Naive thymus-derived CD4-positive, alpha-beta T cell (primary cell): ENCODE measurements at regions of chr6 and their contacts with region 1.

Region 1: DNA sequence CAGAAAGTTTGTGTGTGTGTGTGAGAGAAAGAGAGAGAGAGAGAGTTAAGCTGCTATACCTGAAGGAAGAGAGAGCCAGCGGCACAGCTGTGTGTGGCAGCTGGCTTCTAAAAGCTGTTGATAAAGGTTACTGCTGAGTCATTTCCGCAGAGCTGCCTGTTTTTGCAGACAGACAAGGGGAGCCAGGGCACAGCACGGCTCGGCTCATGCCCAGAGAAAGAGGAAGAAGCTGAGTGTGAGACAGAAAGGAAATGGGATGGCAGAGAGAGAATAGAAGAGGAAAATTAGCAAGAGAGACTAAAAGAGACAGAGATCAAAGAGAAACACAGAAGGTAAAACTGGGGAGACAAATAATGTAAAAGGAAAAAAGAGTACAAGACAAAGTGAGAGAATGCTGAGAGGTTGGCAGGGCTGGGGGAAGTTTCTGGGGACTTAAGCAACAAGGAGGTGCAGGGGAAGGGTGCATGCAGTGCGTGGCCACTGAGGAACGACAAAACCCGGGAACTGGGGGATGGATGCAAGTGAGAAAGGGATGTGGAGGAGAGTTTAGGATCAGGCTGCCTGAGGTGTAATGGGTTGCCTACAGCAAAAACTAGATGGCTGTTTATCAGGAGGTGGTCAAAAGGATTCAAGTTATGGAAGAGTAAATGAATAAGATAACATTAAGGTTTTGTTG is 22.7 kb downstream of the HLA-A start:
- DNase-seq: peak in 8 of 9 donors; percentile 55 to 89 (median 82)
- ATAC-seq: peak; percentile 97
- H3K4me3 ChIP-seq: peak overlapping the region; percentile 52
- H3K4me3 Mint-ChIP-seq: peak overlapping the region; percentile 73 to 96 (median 84)
- H3K27ac ChIP-seq: peak overlapping the region; percentile 52
- H3K27ac Mint-ChIP-seq: peak overlapping the region; percentile 77 to 94 (median 90)
- H3K4me1 ChIP-seq: peaks cover 22 to 30% of the 10 kb centered on the region in 2 donors
- H3K4me1 Mint-ChIP-seq: peaks cover 32 to 51% (median 46%) of the 10 kb centered on the region in 7 donors
- H3K27me3 ChIP-seq: no peaks in the 10 kb centered on the region
- H3K27me3 Mint-ChIP-seq: peaks cover 0 to 2% (median 0%) of the 10 kb centered on the region in 5 donors

Region 2: DNA sequence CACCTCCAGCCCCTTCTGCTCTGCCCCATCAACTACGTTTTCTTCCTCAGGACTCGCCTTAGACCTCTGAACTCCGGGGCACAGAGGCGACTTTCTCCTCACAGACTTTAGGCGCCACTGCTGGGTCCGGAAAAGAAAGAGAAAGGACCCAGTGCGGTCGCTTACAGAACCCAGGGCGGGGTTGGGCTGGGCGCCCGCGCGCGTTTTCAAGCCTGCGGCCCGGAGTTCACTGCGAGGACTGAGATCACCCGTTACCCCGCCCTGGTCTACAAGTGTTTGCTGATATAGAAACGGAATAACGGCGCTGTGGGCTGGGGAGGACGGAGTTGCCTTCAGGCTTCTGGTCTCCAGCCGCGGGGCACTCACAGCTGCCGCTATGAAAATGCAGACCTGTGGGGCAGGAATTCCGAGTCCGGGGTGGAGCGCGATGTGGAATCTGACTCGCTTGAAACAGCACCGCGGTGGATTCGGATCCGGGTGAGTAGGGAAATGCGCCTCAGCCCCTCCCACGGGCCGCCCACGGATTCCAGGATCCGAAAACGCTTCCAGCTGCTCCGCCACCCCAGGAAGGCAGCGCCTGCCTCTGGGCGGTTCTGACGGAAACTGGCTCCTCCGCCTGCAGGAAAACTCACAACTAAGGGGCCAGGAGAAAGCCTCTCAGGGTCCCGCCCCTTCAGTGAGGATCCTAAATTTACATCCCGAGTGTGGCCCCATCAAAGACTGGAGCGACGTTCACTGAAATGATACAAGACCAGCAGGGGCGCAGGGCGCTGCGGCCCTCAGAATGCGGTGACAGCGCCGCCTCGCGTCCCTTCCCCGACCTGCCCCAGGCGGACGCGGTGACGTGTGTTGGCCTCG is 212.3 kb before region 1 on chr6:
- CTCF ChIA-PET with region 1: interaction called, 3 read pairs
- POLR2A ChIA-PET with region 1: interaction called, 3 read pairs
- intact Hi-C with region 1: loop called in 1 of 2 experiments (anchors 5 kb)
- DNase-seq: peak; percentile 69 to 86 (median 77)
- ATAC-seq: peak; percentile 87
- H3K4me3 ChIP-seq: peak overlapping the region; percentile 99
- H3K4me3 Mint-ChIP-seq: peak overlapping the region; percentile 85 to 97 (median 93)
- H3K27ac ChIP-seq: peak overlapping the region; percentile 69
- H3K27ac Mint-ChIP-seq: peak overlapping the region; percentile 16 to 96 (median 88)
- H3K4me1 ChIP-seq: peaks cover 10 to 16% of the 10 kb centered on the region in 2 donors
- H3K4me1 Mint-ChIP-seq: peaks cover 24 to 54% (median 48%) of the 10 kb centered on the region in 7 donors
- H3K27me3 ChIP-seq: no peaks in the 10 kb centered on the region
- H3K27me3 Mint-ChIP-seq: peaks cover 0 to 18% (median 0%) of the 10 kb centered on the region in 5 donors

Region 3: GRCh38 chr6:29917857-29918256 is 47.2 kb before region 1 on chr6:
- CTCF ChIA-PET with region 1: interaction called, 4 read pairs
- POLR2A ChIA-PET with region 1: interaction called, 8 read pairs
- intact Hi-C with region 1: loop called in 1 of 2 experiments (anchors 1 kb)
- DNase-seq: no peak
- ATAC-seq: no peak
- H3K4me3 ChIP-seq: no peak overlapping the region
- H3K4me3 Mint-ChIP-seq: no peak overlapping the region
- H3K27ac ChIP-seq: no peak overlapping the region
- H3K27ac Mint-ChIP-seq: no peak overlapping the region
- H3K4me1 ChIP-seq: no peaks in the 10 kb centered on the region
- H3K4me1 Mint-ChIP-seq: peaks cover 0 to 15% (median 0%) of the 10 kb centered on the region in 7 donors
- H3K27me3 ChIP-seq: no peaks in the 10 kb centered on the region
- H3K27me3 Mint-ChIP-seq: peaks cover 0 to 35% (median 0%) of the 10 kb centered on the region in 5 donors

Region 4: GRCh38 chr6:29948277-29948676 is 16.7 kb before region 1 on chr6:
- CTCF ChIA-PET with region 1: interaction called, 5 read pairs
- POLR2A ChIA-PET with region 1: interaction called, 251 read pairs
- intact Hi-C with region 1: loop called in 1 of 2 experiments (anchors 1 kb)
- DNase-seq: no peak
- ATAC-seq: peak; percentile 5
- H3K4me3 ChIP-seq: no peak overlapping the region
- H3K4me3 Mint-ChIP-seq: peak overlapping the region in 7 of 10 donors; percentile 1 to 97 (median 33)
- H3K27ac ChIP-seq: no peak overlapping the region
- H3K27ac Mint-ChIP-seq: peak overlapping the region in 8 of 9 donors; percentile 32 to 100 (median 70)
- H3K4me1 ChIP-seq: peaks cover 22 to 41% of the 10 kb centered on the region in 2 donors
- H3K4me1 Mint-ChIP-seq: peaks cover 34 to 78% (median 67%) of the 10 kb centered on the region in 7 donors
- H3K27me3 ChIP-seq: no peaks in the 10 kb centered on the region
- H3K27me3 Mint-ChIP-seq: no peaks in the 10 kb centered on the region

Region 5: DNA sequence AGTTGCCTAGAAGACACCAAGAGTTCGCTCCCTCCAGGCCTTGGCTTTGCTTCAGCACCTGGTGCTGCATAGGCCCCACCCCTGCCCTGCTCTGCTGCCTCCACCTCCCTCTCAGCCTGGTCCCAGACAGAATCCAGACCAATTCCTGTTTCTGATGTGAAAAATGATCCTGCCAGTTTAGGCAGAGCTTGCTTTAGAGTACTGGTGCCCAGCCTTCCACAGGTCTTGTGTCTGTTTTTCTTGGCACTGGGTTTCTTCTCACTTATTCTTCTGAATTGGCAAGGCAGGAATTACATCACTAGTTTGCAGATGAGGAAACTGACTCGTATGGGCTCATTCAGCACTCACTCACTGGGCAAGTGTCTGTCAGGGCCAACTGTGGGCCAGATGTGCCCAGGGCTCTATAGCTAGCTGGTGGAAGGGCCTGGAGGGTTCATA is 30.3 kb after region 1 on chr6:
- CTCF ChIA-PET with region 1: no interaction called
- POLR2A ChIA-PET with region 1: no interaction called
- intact Hi-C with region 1: no loop called
- DNase-seq: no peak
- ATAC-seq: no peak
- H3K4me3 ChIP-seq: no peak overlapping the region
- H3K4me3 Mint-ChIP-seq: no peak overlapping the region
- H3K27ac ChIP-seq: no peak overlapping the region
- H3K27ac Mint-ChIP-seq: no peak overlapping the region
- H3K4me1 ChIP-seq: no peaks in the 10 kb centered on the region
- H3K4me1 Mint-ChIP-seq: peaks cover 0 to 5% (median 0%) of the 10 kb centered on the region in 7 donors
- H3K27me3 ChIP-seq: no peaks in the 10 kb centered on the region
- H3K27me3 Mint-ChIP-seq: peaks cover 0 to 38% (median 9%) of the 10 kb centered on the region in 5 donors

Region 6: DNA sequence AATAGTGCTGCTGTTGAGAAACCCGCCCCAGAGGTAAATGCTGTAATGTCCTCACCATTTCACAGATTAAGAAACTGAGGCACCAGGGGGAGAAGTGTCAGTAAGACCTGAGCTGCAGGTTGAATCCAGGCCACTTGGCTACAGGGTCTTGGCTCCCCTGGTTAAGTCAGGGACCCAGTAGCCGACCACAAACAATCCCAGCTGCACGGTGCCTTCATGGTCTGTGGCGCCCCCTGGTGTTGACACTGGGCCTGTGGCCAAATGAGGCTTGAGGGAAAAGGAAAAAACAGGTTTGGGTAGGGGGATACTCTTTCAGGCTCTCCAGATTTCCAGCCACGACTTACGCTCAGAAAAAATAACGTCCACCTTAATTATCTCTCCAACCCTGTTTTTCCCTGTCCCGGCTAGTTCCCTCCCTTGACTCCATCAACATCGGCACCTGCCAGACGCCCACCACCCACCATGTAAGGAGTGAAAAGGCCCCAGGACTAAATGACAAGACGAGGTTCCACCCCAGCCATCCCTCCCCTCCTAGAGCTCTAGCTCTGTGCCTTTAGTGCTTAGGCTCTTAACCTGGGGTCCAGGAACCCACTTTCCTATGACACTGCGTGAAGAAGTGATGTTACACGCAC is 48.4 kb after region 1 on chr6:
- CTCF ChIA-PET with region 1: interaction called, 3 read pairs
- POLR2A ChIA-PET with region 1: no interaction called
- intact Hi-C with region 1: loop called in 1 of 2 experiments (anchors 5 kb)
- DNase-seq: peak in 8 of 9 donors; percentile 13 to 47 (median 32)
- ATAC-seq: peak; percentile 57
- H3K4me3 ChIP-seq: no peak overlapping the region
- H3K4me3 Mint-ChIP-seq: no peak overlapping the region
- H3K27ac ChIP-seq: no peak overlapping the region
- H3K27ac Mint-ChIP-seq: peak overlapping the region in 1 of 9 donors; percentile 12
- H3K4me1 ChIP-seq: no peaks in the 10 kb centered on the region
- H3K4me1 Mint-ChIP-seq: peaks cover 0 to 4% (median 0%) of the 10 kb centered on the region in 7 donors
- H3K27me3 ChIP-seq: peaks cover 0 to 3% of the 10 kb centered on the region in 2 donors
- H3K27me3 Mint-ChIP-seq: peaks cover 4 to 34% (median 15%) of the 10 kb centered on the region in 5 donors